T-cell (primary cell): ENCODE measurements at regions of chr14 and their contacts with region 1.

Region 1: GRCh38 chr14:54440873-54441868 is at the start of gene CNIH1:
- DNase-seq: peak; percentile 80 to 96 (median 89)
- ATAC-seq: peak; percentile 95 to 96 (median 96)
- H3K4me3 ChIP-seq: peak within 1 kb of the TSS; percentile 48 to 68
- H3K4me3 Mint-ChIP-seq: peak within 1 kb of the TSS; percentile 87 to 90 (median 90)
- H3K27ac ChIP-seq: peak within 1 kb of the TSS; percentile 76
- H3K27ac Mint-ChIP-seq: peak within 1 kb of the TSS; percentile 96 to 97
- H3K4me1 ChIP-seq: peaks cover 11 to 16% of the 10 kb centered on the region in 2 experiments
- H3K4me1 Mint-ChIP-seq: peaks cover 43 to 51% (median 47%) of the 10 kb centered on the region in 3 donors
- H3K27me3 ChIP-seq: peaks cover 0 to 2% of the 10 kb centered on the region in 2 experiments
- H3K27me3 Mint-ChIP-seq: no peaks in the 10 kb centered on the region
- total RNA-seq, gene CNIH1: 39.1 to 52.7 (median 42.1) TPM

Region 2: GRCh38 chr14:54374117-54374884 is 66.9 kb before region 1 on chr14:
- CTCF ChIA-PET with region 1: no interaction called
- POLR2A ChIA-PET with region 1: no interaction called
- DNase-seq: no peak
- ATAC-seq: no peak
- H3K4me3 ChIP-seq: no peak overlapping the region
- H3K4me3 Mint-ChIP-seq: no peak overlapping the region
- H3K27ac ChIP-seq: no peak overlapping the region
- H3K27ac Mint-ChIP-seq: no peak overlapping the region
- H3K4me1 ChIP-seq: no peaks in the 10 kb centered on the region
- H3K4me1 Mint-ChIP-seq: no peaks in the 10 kb centered on the region
- H3K27me3 ChIP-seq: peaks cover 0 to 19% of the 10 kb centered on the region in 2 experiments
- H3K27me3 Mint-ChIP-seq: peaks cover 4 to 7% of the 10 kb centered on the region in 2 donors

Region 3: DNA sequence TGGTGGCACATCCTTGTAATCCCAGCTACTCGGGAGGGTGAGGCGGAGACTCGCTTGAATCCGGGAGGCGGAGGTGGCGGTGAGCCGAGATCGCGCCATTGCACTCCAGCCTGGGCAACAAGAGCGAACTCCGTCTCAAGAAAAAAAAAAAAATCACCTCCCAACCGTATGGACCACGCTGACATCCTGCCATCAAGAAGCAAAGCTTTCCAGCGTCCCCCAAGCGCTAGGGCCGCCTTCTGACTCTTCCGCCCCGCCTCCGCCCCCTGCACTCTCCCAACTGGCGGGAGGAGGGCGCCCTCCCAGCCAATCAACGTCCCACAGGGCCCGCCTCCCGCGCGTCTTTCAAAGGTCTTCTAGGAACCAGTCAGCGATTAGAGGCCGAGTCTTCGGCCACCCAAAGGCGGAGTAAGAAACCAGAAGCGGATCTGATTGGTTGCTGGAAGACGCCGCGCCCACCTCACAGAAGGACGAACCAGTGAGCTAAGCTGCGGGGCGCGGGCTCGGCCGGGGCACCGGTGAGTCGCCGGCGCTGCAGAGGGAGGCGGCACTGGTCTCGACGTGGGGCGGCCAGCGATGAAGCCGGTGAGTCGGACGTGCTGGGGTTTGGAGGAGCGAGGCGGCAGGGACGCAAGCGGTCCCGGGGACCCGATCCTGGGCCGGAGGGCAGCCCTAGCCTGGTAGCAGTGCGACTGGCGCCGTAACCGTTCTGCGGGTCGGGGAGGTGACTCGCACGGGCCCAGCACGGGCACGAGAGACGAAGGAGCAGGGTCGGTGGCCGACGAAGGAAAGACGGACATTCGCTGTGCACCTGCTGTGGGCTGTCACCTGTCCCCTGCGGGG is 44.5 kb before region 1 on chr14 and contains the start of gene CDKN3:
- CTCF ChIA-PET with region 1: interaction called in 1 of 2 experiments, 11 read pairs
- POLR2A ChIA-PET with region 1: interaction called in 1 of 2 experiments, 4 read pairs
- DNase-seq: peak; percentile 92 to 97 (median 95)
- ATAC-seq: peak; percentile 92 to 98 (median 94)
- H3K4me3 ChIP-seq: peak within 1 kb of the TSS; percentile 71 to 85
- H3K4me3 Mint-ChIP-seq: peak within 1 kb of the TSS; percentile 81 to 84 (median 81)
- H3K27ac ChIP-seq: peak within 1 kb of the TSS; percentile 28
- H3K27ac Mint-ChIP-seq: peak within 1 kb of the TSS in 1 of 2 donors; percentile 72
- H3K4me1 ChIP-seq: peaks cover 2 to 20% of the 10 kb centered on the region in 2 experiments
- H3K4me1 Mint-ChIP-seq: peaks cover 16 to 24% (median 17%) of the 10 kb centered on the region in 3 donors
- H3K27me3 ChIP-seq: peaks cover 0 to 3% of the 10 kb centered on the region in 2 experiments
- H3K27me3 Mint-ChIP-seq: no peaks in the 10 kb centered on the region
- total RNA-seq, gene CDKN3: 1.2 to 2.7 (median 1.6) TPM

Region 4: GRCh38 chr14:54483073-54483745 is 42.0 kb after region 1 on chr14:
- CTCF ChIA-PET with region 1: no interaction called
- POLR2A ChIA-PET with region 1: interaction called, 3 to 10 read pairs
- DNase-seq: no peak
- ATAC-seq: no peak
- H3K4me3 ChIP-seq: no peak overlapping the region
- H3K4me3 Mint-ChIP-seq: peak overlapping the region in 1 of 3 donors; percentile 5
- H3K27ac ChIP-seq: no peak overlapping the region
- H3K27ac Mint-ChIP-seq: peak overlapping the region; percentile 4 to 23
- H3K4me1 ChIP-seq: peaks cover 8 to 15% of the 10 kb centered on the region in 2 experiments
- H3K4me1 Mint-ChIP-seq: peaks cover 52 to 58% (median 55%) of the 10 kb centered on the region in 3 donors
- H3K27me3 ChIP-seq: no peaks in the 10 kb centered on the region
- H3K27me3 Mint-ChIP-seq: no peaks in the 10 kb centered on the region